ENCODE measurements at regions of chr6 and their contacts with region 1.

Region 1: GRCh38 chr6:24581084-24581669 is 64.8 kb downstream of the KIAA0319 start:
- DNase-seq: peak; percentile 71
- H3K4me3 ChIP-seq: no peak overlapping the region
- H3K27ac ChIP-seq: no peak overlapping the region
- H3K4me1 ChIP-seq: peaks cover 0 to 14% (median 9%) of the 10 kb centered on the region in 4 donors
- H3K27me3 ChIP-seq: no peaks in the 10 kb centered on the region
- CTCF ChIP-seq: peak; percentile 32 to 77 (median 58)
- EP300 ChIP-seq: no peak
- POLR2A ChIP-seq: no peak

Region 2: DNA sequence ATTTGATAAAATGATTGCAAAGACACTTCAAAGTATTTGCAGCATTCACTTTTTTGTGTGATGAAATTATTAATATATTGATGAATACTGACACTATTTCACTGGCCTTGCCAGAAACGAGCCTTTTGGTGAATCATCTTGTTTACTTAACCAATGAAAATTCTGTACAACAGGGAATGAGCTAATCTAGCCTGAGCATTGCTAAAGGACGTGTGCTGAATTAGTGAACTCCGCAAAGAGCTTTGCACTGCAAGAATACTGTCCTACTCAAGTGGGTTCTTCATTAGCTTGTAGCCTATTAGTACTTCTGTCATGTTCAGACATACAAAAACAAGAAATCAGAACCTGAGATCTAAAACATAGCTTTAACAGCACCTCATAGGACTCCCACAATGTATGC is 627.2 kb before region 1 on chr6:
- intact Hi-C with region 1: no loop called
- DNase-seq: no peak
- H3K4me3 ChIP-seq: no peak overlapping the region
- H3K27ac ChIP-seq: no peak overlapping the region
- H3K4me1 ChIP-seq: peaks cover 0 to 9% (median 0%) of the 10 kb centered on the region in 4 donors
- H3K27me3 ChIP-seq: no peaks in the 10 kb centered on the region
- CTCF ChIP-seq: no peak
- EP300 ChIP-seq: no peak
- POLR2A ChIP-seq: no peak

Region 3: GRCh38 chr6:24205020-24205492 is 376.1 kb before region 1 on chr6:
- intact Hi-C with region 1: no loop called
- DNase-seq: no peak
- H3K4me3 ChIP-seq: no peak overlapping the region
- H3K27ac ChIP-seq: no peak overlapping the region
- H3K4me1 ChIP-seq: no peaks in the 10 kb centered on the region
- H3K27me3 ChIP-seq: no peaks in the 10 kb centered on the region
- CTCF ChIP-seq: peak; percentile 37 to 65 (median 60)
- EP300 ChIP-seq: no peak
- POLR2A ChIP-seq: no peak

Region 4: DNA sequence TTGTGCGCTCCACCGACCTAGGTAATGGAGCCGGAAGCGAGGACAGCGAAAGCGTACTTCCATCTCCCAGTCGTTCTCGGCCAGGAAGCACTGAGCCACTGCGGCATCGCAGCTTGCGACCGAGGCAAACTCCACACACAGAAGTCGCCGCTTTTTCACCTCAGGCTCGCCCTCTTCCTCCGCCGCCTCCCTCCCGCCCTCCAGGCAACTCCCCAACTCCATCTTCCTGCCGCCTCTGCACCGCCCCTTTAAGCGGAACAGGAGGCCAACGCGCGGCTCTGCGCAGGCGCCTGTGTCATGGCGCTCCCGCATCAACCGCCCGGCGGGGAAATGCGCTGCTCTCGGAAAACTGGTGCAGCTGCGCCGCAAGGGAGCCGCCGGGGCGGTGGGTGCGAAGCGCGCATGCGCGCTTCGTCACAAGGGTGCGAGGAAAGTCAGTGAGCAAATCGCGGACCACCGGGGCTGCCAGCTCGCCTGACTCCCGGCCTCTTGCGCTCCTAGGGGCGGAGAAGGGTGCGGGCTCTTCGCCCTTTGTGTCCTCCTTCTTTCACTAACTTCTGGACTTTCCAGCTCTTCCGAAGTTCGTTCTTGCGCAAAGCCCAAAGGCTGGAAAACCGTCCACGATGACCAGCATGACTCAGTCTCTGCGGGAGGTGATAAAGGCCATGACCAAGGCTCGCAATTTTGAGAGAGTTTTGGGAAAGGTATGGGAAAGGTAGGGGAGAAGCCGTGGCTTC is 85.6 kb after region 1 on chr6 and contains the starts of genes ACOT13 and TDP2:
- intact Hi-C with region 1: loop called (anchors 2 kb)
- DNase-seq: peak; percentile 98
- H3K4me3 ChIP-seq: peak within 1 kb of the TSS; percentile 76 to 97 (median 80)
- H3K27ac ChIP-seq: peak within 1 kb of the TSS; percentile 88 to 92 (median 92)
- H3K4me1 ChIP-seq: peaks cover 0 to 32% (median 26%) of the 10 kb centered on the region in 4 donors
- H3K27me3 ChIP-seq: no peaks in the 10 kb centered on the region
- CTCF ChIP-seq: peak; percentile 42 to 63 (median 52)
- EP300 ChIP-seq: no peak
- POLR2A ChIP-seq: peak; percentile 74 to 88
- total RNA-seq, gene ACOT13: 5.3 to 11.8 (median 9.2) TPM
- total RNA-seq, gene TDP2: 30.4 to 67.6 (median 48.2) TPM

Region 5: DNA sequence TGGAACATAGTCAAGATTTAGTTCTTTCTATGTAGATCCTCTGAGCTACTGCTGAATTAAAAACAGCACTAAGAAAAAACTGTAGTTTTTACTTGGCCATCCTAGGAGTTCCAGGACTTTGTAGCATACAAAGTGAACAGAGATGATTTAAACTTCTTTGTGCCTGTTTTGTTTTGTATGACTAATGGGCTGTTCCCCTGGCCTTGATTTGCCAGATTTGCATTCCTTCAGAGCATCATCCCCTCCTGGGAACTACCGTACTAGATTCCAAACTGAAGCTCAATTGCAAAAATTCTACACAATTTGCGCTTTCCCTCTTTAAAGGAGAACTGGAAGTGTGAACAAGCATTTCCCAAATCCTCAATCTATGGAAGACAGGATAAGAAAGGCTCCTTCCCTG is 108.8 kb after region 1 on chr6:
- intact Hi-C with region 1: loop called (anchors 1 kb)
- DNase-seq: no peak
- H3K4me3 ChIP-seq: no peak overlapping the region
- H3K27ac ChIP-seq: no peak overlapping the region
- H3K4me1 ChIP-seq: no peaks in the 10 kb centered on the region
- H3K27me3 ChIP-seq: no peaks in the 10 kb centered on the region
- CTCF ChIP-seq: no peak
- EP300 ChIP-seq: no peak
- POLR2A ChIP-seq: no peak

Region 6: GRCh38 chr6:24766680-24767462 is 185.7 kb after region 1 on chr6:
- intact Hi-C with region 1: loop called (anchors 2 kb)
- DNase-seq: no peak
- H3K4me3 ChIP-seq: no peak overlapping the region
- H3K27ac ChIP-seq: no peak overlapping the region
- H3K4me1 ChIP-seq: no peaks in the 10 kb centered on the region
- H3K27me3 ChIP-seq: no peaks in the 10 kb centered on the region
- CTCF ChIP-seq: peak in 2 of 4 experiments; percentile 9 to 20
- EP300 ChIP-seq: no peak
- POLR2A ChIP-seq: no peak

Region 7: DNA sequence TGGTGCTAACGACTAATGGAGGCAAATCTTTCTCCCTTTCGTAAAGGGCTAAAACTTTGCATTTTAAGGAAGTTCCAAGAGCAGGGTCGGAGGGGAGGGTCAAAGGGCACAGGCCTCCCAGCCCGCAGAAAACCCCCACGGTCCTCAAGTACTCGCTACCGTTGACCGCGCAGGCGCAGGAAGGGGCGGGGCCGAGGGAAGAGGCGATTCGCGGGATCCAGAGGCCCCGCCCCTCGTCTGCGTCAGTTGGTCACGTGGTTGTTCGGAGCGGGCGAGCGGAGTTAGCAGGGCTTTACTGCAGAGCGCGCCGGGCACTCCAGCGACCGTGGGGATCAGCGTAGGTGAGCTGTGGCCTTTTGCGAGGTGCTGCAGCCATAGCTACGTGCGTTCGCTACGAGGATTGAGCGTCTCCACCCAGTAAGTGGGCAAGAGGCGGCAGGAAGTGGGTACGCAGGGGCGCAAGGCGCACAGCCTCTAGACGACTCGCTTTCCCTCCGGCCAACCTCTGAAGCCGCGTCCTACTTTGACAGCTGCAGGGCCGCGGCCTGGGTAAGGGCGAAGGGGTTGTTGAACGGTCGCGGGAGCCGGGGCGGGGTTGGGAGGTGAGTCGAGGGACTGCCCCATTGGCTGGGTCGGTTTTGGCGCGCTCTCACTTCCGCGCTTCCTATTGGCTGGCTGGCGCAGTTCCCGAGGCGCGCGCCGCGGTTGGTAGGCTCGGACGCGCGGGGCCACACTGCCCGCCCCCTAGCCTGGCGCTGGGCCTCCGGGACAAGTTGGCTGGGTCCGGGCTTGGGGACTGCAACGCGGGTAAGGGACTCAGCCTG is 193.7 kb after region 1 on chr6 and contains the start of gene GMNN:
- intact Hi-C with region 1: loop called (anchors 2 kb)
- DNase-seq: peak; percentile 99
- H3K4me3 ChIP-seq: peak within 1 kb of the TSS; percentile 86 to 99 (median 97)
- H3K27ac ChIP-seq: peak within 1 kb of the TSS; percentile 93 to 99 (median 98)
- H3K4me1 ChIP-seq: peaks cover 0 to 19% (median 5%) of the 10 kb centered on the region in 4 donors
- H3K27me3 ChIP-seq: no peaks in the 10 kb centered on the region
- CTCF ChIP-seq: no peak
- EP300 ChIP-seq: no peak
- POLR2A ChIP-seq: peak; percentile 27 to 59
- total RNA-seq, gene GMNN: 4.4 to 9.7 (median 8.2) TPM

Region 8: GRCh38 chr6:25070547-25071366 is 489.6 kb after region 1 on chr6:
- intact Hi-C with region 1: loop called (anchors 5 kb)
- DNase-seq: peak; percentile 88
- H3K4me3 ChIP-seq: no peak overlapping the region
- H3K27ac ChIP-seq: no peak overlapping the region
- H3K4me1 ChIP-seq: no peaks in the 10 kb centered on the region
- H3K27me3 ChIP-seq: no peaks in the 10 kb centered on the region
- CTCF ChIP-seq: peak; percentile 71 to 88 (median 87)
- EP300 ChIP-seq: no peak
- POLR2A ChIP-seq: no peak

Measured in sigmoid colon (tissue), 7 donors.